ENCODE measurements at regions of chr4 and their contacts with region 1.

Region 1: GRCh38 chr4:122602277-122603142 is 18.4 kb downstream of the IL21 start:
- DNase-seq: no peak
- ATAC-seq: peak; percentile 85
- H3K4me3 ChIP-seq: peak overlapping the region in 1 of 2 experiments; percentile 23; a peak in 1 of 4 replicates
- H3K27ac ChIP-seq: no peak overlapping the region
- H3K4me1 ChIP-seq: no peaks in the 10 kb centered on the region
- H3K27me3 ChIP-seq: no peaks in the 10 kb centered on the region
- CTCF ChIP-seq: peak; percentile 46; the same call in 1 of the 2 replicates

Region 2: DNA sequence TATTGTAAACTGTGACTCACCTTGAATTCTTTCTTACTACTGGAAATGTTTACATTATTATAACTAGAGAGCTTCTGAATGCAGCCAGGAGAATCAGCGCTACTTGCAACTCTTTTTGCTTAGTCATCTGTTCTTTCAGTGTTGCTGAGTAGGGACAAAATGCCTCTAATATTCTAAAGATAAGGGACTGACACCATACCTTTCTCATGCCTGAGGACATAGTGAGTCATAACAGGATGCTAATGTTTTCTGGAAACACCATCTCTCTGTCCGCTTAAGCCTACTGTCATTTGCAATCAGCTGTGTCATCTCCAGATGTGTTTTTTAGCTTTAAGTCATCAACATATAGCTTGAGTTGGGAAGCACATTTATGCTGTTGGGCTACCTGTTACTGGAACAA is 1330.0 kb before region 1 on chr4:
- CTCF ChIA-PET with region 1: no interaction called
- POLR2A ChIA-PET with region 1: no interaction called
- in situ Hi-C with region 1: no loop called
- intact Hi-C with region 1: no loop called
- DNase-seq: no peak
- ATAC-seq: no peak
- H3K4me3 ChIP-seq: no peak overlapping the region
- H3K27ac ChIP-seq: no peak overlapping the region
- H3K4me1 ChIP-seq: no peaks in the 10 kb centered on the region
- H3K27me3 ChIP-seq: no peaks in the 10 kb centered on the region
- CTCF ChIP-seq: no peak

Region 3: GRCh38 chr4:122716825-122717448 is 114.4 kb after region 1 on chr4:
- CTCF ChIA-PET with region 1: no interaction called
- POLR2A ChIA-PET with region 1: no interaction called
- in situ Hi-C with region 1: no loop called
- intact Hi-C with region 1: loop called (anchors 5 kb)
- DNase-seq: peak; percentile 42
- ATAC-seq: peak; percentile 90
- H3K4me3 ChIP-seq: no peak overlapping the region
- H3K27ac ChIP-seq: no peak overlapping the region
- H3K4me1 ChIP-seq: no peaks in the 10 kb centered on the region
- H3K27me3 ChIP-seq: no peaks in the 10 kb centered on the region
- CTCF ChIP-seq: peak; percentile 85

Region 4: DNA sequence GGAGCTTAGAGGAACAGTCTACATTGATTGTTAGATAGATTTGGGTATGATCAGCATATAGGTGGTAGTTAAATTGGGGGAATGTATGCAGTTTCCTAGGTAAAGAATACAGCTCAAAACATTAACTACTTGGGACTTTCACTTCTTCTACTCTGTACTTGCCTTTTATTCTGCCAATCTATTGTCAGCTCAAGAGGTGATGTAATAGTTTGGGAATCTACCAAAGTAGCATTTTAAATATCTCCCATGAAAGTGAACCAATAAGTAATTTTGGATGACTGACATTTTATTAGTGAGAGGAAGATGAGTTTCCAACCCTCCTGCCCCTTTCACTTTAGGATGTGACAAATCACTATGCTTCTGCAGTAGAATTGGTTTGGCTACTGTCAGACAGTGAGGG is 276.5 kb after region 1 on chr4:
- CTCF ChIA-PET with region 1: no interaction called
- POLR2A ChIA-PET with region 1: no interaction called
- in situ Hi-C with region 1: no loop called
- intact Hi-C with region 1: no loop called
- DNase-seq: no peak
- ATAC-seq: no peak
- H3K4me3 ChIP-seq: no peak overlapping the region
- H3K27ac ChIP-seq: no peak overlapping the region
- H3K4me1 ChIP-seq: peaks cover 4% of the 10 kb centered on the region; the same call in 1 of the 2 replicates
- H3K27me3 ChIP-seq: no peaks in the 10 kb centered on the region
- CTCF ChIP-seq: no peak

Region 5: DNA sequence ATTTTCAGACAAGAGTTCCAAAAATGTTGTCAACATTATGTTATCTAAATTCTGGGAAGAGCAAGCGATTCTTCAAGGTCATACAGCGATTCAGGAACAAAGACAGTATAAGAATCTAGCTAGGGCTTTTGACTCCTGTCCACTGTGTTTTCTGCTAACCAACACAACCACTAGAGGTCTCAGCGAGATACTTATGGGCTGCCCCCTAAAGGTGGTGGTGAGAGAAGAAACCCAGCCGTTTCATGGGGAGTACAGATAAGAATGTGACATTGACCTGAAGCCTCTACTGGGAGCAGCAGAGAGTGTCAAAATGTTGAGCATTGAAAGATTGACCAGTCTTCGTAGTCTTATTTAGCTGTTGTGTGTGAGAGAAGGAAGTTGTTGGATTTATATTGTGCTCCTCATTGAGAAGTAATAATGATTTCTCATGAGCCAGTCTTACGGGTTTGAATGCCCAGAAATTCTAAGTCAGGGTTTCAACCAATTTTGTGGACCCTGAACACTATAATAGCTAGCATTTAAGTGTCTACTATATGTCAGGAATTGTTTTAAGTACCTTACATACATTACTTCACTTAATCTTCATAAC is 962.3 kb after region 1 on chr4:
- CTCF ChIA-PET with region 1: no interaction called
- POLR2A ChIA-PET with region 1: no interaction called
- in situ Hi-C with region 1: no loop called
- intact Hi-C with region 1: no loop called
- DNase-seq: peak; percentile 52
- ATAC-seq: peak; percentile 84
- H3K4me3 ChIP-seq: no peak overlapping the region
- H3K27ac ChIP-seq: peak overlapping the region; percentile 78
- H3K4me1 ChIP-seq: peaks cover 8% of the 10 kb centered on the region
- H3K27me3 ChIP-seq: no peaks in the 10 kb centered on the region
- CTCF ChIP-seq: peak; percentile 78